B cell (primary cell): ENCODE measurements at regions of chr11 and their contacts with region 1.

Region 1: DNA sequence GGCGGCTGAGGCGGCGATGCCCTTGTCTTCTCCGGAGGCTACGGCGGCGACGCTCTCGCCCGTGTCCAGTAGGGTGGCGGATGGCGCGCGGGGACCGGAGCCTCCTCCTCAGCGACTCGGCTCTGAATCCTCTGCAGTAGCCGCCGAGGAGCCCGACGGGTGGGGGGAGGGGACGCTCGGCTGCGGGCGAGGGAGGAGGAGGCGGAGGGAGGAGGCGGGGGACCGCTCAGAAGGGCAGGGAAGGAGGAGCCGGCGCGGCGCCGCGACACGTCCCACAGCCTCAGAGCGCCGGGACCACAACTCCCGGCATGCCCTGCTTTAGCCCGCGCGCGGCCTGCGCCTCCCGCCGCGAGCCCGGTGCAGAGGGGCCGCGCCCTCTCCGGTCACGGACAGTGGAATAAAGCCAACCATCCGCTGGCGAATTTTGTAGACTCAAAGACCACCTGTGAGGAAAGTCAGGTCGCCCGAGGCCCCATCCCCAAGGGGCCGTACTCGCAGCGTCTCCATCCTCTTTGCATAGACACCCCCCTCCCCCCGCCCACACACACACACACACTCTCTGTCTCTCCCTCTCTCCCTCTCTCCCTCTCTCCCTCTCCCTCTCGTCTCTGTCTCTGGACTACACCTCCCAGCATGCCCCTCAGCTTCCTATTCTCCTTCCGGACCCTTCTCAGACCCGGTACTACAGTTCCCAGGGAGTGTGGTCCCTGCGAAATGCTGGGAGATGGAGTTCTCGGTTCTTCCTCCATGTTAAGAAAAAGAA is at the start of gene FAM168A:
- DNase-seq: peak; percentile 96
- ATAC-seq: peak; percentile 92
- H3K4me3 ChIP-seq: peak within 1 kb of the TSS; percentile 68 to 91 (median 71)
- H3K4me3 Mint-ChIP-seq: peak within 1 kb of the TSS; percentile 91
- H3K27ac ChIP-seq: peak within 1 kb of the TSS; percentile 77 to 78
- H3K27ac Mint-ChIP-seq: peak within 1 kb of the TSS; percentile 92
- H3K4me1 ChIP-seq: peaks cover 8 to 15% of the 10 kb centered on the region in 2 donors
- H3K4me1 Mint-ChIP-seq: peaks cover 32% of the 10 kb centered on the region
- H3K27me3 ChIP-seq: no peaks in the 10 kb centered on the region
- H3K27me3 Mint-ChIP-seq: no peaks in the 10 kb centered on the region
- CTCF ChIP-seq: peak; percentile 34
- total RNA-seq, gene FAM168A: 23.3 and 26.8 TPM in 2 replicates

Region 2: GRCh38 chr11:71787098-71787823 is 1810.9 kb before region 1 on chr11:
- CTCF ChIA-PET with region 1: no interaction called
- POLR2A ChIA-PET with region 1: no interaction called
- intact Hi-C with region 1: loop called (anchors 5 kb)
- DNase-seq: peak; percentile 97
- ATAC-seq: peak; percentile 93
- H3K4me3 ChIP-seq: peak overlapping the region; percentile 11 to 93 (median 76)
- H3K4me3 Mint-ChIP-seq: peak overlapping the region; percentile 92
- H3K27ac ChIP-seq: peak overlapping the region; percentile 93 to 95
- H3K27ac Mint-ChIP-seq: peak overlapping the region; percentile 98
- H3K4me1 ChIP-seq: peaks cover 0 to 10% of the 10 kb centered on the region in 2 donors
- H3K4me1 Mint-ChIP-seq: peaks cover 15% of the 10 kb centered on the region
- H3K27me3 ChIP-seq: no peaks in the 10 kb centered on the region
- H3K27me3 Mint-ChIP-seq: no peaks in the 10 kb centered on the region
- CTCF ChIP-seq: no peak

Region 3: GRCh38 chr11:73307323-73308002 is 290.7 kb before region 1 on chr11:
- CTCF ChIA-PET with region 1: no interaction called
- POLR2A ChIA-PET with region 1: no interaction called
- intact Hi-C with region 1: loop called (anchors 1 kb)
- DNase-seq: peak; percentile 91
- ATAC-seq: peak; percentile 76
- H3K4me3 ChIP-seq: peak overlapping the region; percentile 51 to 84 (median 65)
- H3K4me3 Mint-ChIP-seq: peak overlapping the region; percentile 89
- H3K27ac ChIP-seq: no peak overlapping the region
- H3K27ac Mint-ChIP-seq: peak overlapping the region; percentile 51
- H3K4me1 ChIP-seq: peaks cover 20 to 25% of the 10 kb centered on the region in 2 donors
- H3K4me1 Mint-ChIP-seq: peaks cover 13% of the 10 kb centered on the region
- H3K27me3 ChIP-seq: peaks cover 0 to 52% (median 18%) of the 10 kb centered on the region in 4 experiments
- H3K27me3 Mint-ChIP-seq: peaks cover 24% of the 10 kb centered on the region
- CTCF ChIP-seq: peak; percentile 72

Region 4: DNA sequence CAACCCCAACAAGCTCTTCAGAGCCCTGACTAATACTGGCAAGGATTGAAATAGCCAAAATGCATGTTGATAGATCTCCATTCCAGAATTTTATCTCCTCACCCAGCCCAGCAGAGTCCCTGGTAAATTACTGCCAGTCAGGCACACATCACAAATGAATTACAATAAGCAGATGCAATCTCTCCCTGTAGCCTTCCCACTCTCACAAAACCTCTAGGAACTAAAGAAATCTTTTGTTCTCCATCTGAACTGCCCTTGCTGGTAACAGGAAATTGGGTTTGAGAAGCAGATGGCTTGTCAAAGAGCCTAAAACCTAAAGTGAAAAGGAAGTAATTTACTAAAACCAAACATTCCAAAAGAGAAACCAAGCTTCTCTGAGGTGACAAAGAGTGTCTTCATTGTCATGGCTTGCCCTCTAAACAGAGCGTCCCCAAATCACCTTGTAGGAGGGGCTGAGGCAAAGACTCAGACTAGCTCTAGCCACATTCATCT is 59.7 kb before region 1 on chr11:
- CTCF ChIA-PET with region 1: no interaction called
- POLR2A ChIA-PET with region 1: no interaction called
- intact Hi-C with region 1: no loop called
- DNase-seq: no peak
- ATAC-seq: no peak
- H3K4me3 ChIP-seq: no peak overlapping the region
- H3K4me3 Mint-ChIP-seq: no peak overlapping the region
- H3K27ac ChIP-seq: no peak overlapping the region
- H3K27ac Mint-ChIP-seq: no peak overlapping the region
- H3K4me1 ChIP-seq: peaks cover 11 to 13% of the 10 kb centered on the region in 2 donors
- H3K4me1 Mint-ChIP-seq: peaks cover 18% of the 10 kb centered on the region
- H3K27me3 ChIP-seq: no peaks in the 10 kb centered on the region
- H3K27me3 Mint-ChIP-seq: no peaks in the 10 kb centered on the region
- CTCF ChIP-seq: no peak

Region 5: DNA sequence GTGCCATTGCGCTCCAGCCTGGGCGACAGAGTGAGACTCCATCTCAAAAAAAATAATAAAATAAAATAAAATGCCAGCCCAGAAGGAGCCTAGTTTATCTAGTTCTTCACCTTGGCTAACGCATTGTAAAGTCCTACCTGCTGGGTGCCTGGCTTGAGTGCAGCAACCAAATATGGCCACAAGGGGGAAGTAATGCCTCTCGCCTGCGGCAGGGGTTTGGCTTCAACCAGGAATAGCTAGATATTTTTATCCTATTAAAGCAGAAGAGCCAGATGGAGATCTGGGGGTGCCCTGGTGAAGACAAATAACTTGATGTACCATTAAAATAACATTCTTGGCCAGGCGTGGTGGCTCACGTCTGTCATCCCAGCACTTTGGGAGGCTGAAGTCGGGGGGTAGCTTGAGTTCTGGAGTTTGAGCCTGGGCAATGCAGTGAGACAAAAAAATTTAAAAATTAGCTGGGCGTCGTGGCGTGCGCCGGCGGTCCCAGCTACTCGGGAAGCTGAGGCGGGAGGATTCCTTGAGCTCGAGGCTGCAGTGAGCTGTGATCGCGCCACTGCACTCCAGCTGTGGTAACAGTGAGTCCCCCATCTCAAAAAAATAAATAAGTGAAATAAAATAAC is 27.7 kb after region 1 on chr11:
- CTCF ChIA-PET with region 1: interaction called, 5 read pairs
- POLR2A ChIA-PET with region 1: no interaction called
- intact Hi-C with region 1: loop called (anchors 1 kb)
- DNase-seq: peak; percentile 75
- ATAC-seq: peak; percentile 89
- H3K4me3 ChIP-seq: no peak overlapping the region
- H3K4me3 Mint-ChIP-seq: no peak overlapping the region
- H3K27ac ChIP-seq: no peak overlapping the region
- H3K27ac Mint-ChIP-seq: no peak overlapping the region
- H3K4me1 ChIP-seq: peaks cover 7 to 14% of the 10 kb centered on the region in 2 donors
- H3K4me1 Mint-ChIP-seq: peaks cover 8% of the 10 kb centered on the region
- H3K27me3 ChIP-seq: peaks cover 0 to 11% (median 0%) of the 10 kb centered on the region in 4 experiments
- H3K27me3 Mint-ChIP-seq: peaks cover 6% of the 10 kb centered on the region
- CTCF ChIP-seq: peak; percentile 91

Region 6: DNA sequence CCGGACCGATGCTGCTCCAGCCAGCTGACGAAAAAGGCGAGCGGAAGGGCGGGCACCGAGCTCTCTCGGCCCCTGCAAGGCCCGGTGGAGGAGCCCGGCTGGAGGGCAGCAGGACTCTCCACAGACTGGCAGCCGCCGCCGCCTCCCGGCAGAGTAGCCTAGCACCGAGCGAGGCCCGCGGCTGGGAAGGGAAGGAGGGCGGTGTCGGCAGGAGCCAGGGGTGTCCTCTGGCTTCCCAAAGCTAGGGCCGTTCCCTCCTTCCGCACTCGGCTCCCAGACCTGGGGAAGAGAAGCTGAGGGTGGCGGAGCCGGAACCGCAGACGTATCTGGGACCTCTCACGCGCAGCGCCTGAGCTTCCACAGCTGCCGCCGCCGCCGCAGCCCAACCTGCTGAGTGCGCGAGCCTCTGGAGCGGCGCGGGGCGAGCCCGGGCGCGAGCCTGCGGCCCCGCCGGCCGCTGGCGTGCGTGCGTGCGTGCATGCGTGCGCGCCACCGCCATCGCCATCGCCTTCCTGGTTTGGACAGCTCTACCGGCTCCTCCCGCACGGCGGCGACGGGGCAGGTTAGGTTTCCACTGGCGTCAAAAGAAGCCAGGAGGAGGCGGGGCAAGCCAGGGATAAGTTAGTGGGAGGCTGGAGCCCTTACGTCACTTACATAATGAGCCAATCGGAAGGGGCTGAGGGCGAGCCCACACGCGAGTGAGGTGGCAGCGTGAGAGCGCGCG is 162.7 kb after region 1 on chr11 and contains the start of gene RAB6A:
- CTCF ChIA-PET with region 1: no interaction called
- POLR2A ChIA-PET with region 1: no interaction called
- intact Hi-C with region 1: loop called (anchors 1 kb)
- DNase-seq: peak; percentile 100
- ATAC-seq: peak; percentile 88
- H3K4me3 ChIP-seq: peak within 1 kb of the TSS; percentile 39 to 91 (median 86)
- H3K4me3 Mint-ChIP-seq: peak within 1 kb of the TSS; percentile 86
- H3K27ac ChIP-seq: peak within 1 kb of the TSS; percentile 81 to 89
- H3K27ac Mint-ChIP-seq: peak within 1 kb of the TSS; percentile 92
- H3K4me1 ChIP-seq: peaks cover 15 to 17% of the 10 kb centered on the region in 2 donors
- H3K4me1 Mint-ChIP-seq: peaks cover 27% of the 10 kb centered on the region
- H3K27me3 ChIP-seq: no peaks in the 10 kb centered on the region
- H3K27me3 Mint-ChIP-seq: peaks cover 3% of the 10 kb centered on the region
- CTCF ChIP-seq: peak; percentile 28
- total RNA-seq, gene RAB6A: 70.5 and 80.5 TPM in 2 replicates